Activated T-helper 2 cell treated with anti-CD3 and anti-CD28 coated beads, Interferon-gamma antibody, Interleukin-2, Interleukin-4, amounts not matched to agents 10 μg/mL and 5 μg/mL and 100 μg/mL, durations not matched to agents 14 hours and 24 hours and 36 hours (primary cell): ENCODE measurements at regions of chr10 and their contacts with region 1.

Region 1: GRCh38 chr10:89301721-89302445 is at the start of gene IFIT2:
- DNase-seq: peak; percentile 12
- H3K4me3 Mint-ChIP-seq: peak within 1 kb of the TSS; percentile 74
- H3K27ac Mint-ChIP-seq: peak within 1 kb of the TSS; percentile 30
- H3K4me1 Mint-ChIP-seq: peaks cover 24% of the 10 kb centered on the region
- H3K27me3 Mint-ChIP-seq: peaks cover 17% of the 10 kb centered on the region
- total RNA-seq, gene IFIT2: 0.57 and 0.82 TPM in 2 replicates

Region 2: DNA sequence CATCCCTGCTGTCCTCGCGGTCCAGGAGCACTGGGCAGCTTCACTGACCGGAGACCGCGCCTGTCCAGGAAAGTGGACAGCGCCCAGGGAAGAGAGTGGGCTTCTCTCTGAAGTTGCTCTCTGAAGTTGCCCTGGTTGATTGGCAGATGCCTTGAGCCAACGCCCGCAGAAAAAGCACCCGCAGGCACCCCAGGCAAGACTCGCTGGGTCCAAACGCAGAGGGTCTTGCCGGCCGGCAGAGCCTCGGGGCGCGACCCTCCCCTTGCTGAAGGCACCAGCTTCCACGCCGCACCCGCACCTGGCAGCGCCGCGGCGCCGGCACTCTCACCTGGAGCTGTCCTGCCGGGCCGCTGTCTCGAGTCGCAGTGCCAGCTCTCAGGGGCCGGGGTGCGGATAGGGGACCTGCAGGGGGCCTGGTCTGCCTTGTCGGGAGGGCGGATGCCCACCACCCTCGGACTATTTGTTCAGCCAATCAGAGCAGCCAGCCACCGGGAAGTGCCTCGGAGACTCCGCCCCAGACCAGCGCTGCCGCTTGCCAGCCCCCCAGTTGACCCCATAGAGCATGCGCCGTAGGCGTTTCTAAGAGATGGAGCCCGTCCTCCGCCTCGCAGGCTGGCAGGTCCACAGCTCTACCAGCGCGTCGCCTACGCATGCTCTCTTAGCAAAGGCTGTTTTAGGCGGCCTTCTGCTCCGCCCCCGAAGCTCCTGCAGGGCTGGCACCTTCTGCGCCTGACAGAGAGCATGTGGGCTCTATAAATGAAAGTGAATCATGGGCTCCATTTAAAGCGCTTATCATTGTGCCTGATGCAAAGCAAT is 50.3 kb before region 1 on chr10 and contains the start of gene LIPA:
- intact Hi-C with region 1: no loop called
- DNase-seq: peak; percentile 90
- H3K4me3 Mint-ChIP-seq: peak within 1 kb of the TSS; percentile 79
- H3K27ac Mint-ChIP-seq: no peak within 1 kb of the TSS
- H3K4me1 Mint-ChIP-seq: peaks cover 23% of the 10 kb centered on the region
- H3K27me3 Mint-ChIP-seq: peaks cover 10% of the 10 kb centered on the region
- total RNA-seq, gene LIPA: 12.9 and 13.6 TPM in 2 replicates

Region 3: DNA sequence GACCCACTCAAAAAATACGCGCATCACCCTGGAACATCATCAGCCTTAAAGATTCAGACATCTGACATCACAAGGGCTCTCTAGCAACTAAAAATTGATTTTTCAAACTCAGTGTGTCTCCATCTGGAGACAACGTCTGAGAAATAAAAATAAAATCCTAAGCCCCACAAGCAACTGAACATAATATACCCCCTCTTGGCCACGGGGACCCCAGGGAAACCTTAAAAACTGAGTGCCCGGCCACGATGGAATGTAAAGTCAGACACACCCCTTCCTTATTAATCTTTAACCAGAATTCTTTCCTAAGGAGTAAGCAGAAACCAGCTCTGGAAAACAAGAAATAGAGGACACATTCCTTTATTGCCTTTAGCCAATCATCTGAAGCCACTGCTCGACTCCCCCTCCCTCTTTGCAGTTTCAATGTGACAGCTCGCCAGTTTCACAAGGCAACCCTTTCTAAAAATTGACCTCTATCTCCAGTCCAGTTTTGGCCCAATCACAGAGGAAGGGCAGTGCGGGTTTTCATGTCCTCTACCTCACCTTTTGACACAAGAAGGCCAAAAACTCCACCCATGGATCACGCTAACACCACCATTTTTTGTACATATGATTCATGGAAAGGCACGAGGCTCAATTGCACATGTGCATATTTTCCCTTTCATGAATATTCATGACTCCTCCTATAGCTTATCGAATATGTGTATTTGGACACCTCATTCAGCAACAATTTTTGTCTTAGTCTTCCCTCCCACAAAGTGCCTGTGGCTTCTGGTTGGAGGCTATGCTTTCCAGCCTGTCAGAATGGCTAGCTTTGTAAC is 50.1 kb after region 1 on chr10:
- intact Hi-C with region 1: no loop called
- DNase-seq: no peak
- H3K4me3 Mint-ChIP-seq: no peak overlapping the region
- H3K27ac Mint-ChIP-seq: no peak overlapping the region
- H3K4me1 Mint-ChIP-seq: peaks cover 18% of the 10 kb centered on the region
- H3K27me3 Mint-ChIP-seq: peaks cover 67% of the 10 kb centered on the region

Region 4: DNA sequence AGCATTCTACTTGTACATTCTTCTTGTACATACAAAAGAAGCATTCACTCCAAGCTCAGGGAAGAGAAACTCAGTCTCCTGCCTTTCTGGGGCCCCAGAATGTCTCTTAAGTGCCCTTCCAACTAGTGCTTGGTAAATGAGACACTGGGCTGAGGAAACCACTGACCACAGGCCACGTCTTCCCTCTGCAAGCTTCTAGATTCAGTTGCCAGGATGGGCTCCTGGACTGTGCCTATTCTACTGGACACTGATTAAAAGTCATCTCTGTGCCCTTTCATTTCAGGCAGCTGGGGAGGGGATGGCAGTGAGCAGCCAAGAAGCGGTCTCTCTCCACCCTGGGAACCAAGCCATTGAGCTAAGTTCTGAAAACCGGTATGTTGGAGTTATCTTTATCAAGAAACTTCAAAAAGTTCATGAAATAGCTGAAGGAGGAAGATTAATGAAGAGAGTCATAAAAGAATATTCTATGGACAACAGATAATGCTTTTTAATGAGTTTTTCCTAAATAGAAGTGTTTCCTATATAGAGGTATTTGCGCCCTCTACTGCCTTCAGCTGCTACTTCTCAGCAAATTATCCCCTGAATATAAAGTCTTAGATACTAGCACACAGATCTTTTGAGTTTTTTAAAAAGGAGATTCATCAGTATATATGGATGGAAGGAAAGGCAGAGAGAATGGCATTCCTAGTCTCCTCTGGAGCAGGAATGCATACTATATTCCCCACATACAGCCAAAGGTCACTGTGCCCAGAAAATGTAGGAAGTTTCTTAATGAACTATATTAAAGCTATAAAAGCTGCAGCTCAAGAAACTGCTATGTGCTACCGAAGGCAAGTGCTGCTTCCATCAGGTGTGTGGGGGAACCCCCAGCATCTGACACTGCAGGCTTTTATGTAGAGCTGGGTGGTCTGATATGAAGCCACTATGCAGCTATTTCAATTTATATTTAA is 67.5 kb after region 1 on chr10:
- intact Hi-C with region 1: no loop called
- DNase-seq: no peak
- H3K4me3 Mint-ChIP-seq: no peak overlapping the region
- H3K27ac Mint-ChIP-seq: no peak overlapping the region
- H3K4me1 Mint-ChIP-seq: peaks cover 11% of the 10 kb centered on the region
- H3K27me3 Mint-ChIP-seq: peaks cover 36% of the 10 kb centered on the region

Region 5: GRCh38 chr10:89391917-89392756 is 90.3 kb after region 1 on chr10 and contains the start of gene IFIT1:
- intact Hi-C with region 1: loop called (anchors 5 kb)
- DNase-seq: peak; percentile 44
- H3K4me3 Mint-ChIP-seq: peak within 1 kb of the TSS; percentile 80
- H3K27ac Mint-ChIP-seq: peak within 1 kb of the TSS; percentile 3
- H3K4me1 Mint-ChIP-seq: peaks cover 16% of the 10 kb centered on the region
- H3K27me3 Mint-ChIP-seq: peaks cover 5% of the 10 kb centered on the region
- total RNA-seq, gene IFIT1: 0.09 and 0.32 TPM in 2 replicates